ENCODE measurements at regions of chr1 and their contacts with region 1.

Region 1: DNA sequence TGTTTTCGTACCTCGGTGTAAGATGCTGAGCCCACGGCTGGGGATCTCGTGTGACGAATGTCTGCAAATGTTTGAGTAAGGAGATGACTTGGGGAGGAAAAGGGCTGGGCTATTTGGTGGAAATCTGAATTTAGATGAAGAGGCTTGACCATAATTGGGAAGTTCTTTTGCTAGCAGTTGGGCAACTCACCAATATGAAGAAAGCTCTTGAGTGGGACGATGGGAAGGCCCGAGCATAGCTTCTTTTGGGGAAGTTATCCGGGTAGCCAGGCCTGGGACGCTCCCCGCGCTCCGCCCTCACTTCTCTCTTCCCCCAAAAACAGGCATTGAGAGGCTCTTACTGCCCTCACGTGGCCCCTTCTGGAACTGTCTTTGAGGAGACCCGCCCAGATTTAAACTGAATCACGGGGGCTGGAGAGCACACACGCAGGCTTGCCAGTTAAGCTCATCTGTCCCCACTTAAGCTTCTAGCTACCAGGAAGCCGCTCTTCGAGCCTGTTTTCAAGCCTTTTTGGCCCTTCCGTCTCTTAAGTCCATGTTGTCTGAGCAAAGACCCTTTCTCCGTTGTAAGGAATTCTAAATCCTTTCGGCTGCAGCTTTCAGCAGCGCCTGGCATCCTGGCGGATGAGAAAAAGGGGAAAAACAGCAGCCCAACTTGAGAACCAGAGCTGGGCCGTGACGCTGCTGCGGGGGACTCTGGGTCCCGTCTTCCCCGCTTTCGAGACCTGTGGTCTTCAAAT is 93.1 kb downstream of the NID1 start:
- DNase-seq: peak; percentile 94
- ATAC-seq: peak; percentile 99
- H3K4me3 Mint-ChIP-seq: peak overlapping the region; percentile 75
- H3K27ac Mint-ChIP-seq: peak overlapping the region; percentile 91
- H3K4me1 Mint-ChIP-seq: peaks cover 22% of the 10 kb centered on the region
- H3K27me3 Mint-ChIP-seq: peaks cover 2% of the 10 kb centered on the region

Region 2: DNA sequence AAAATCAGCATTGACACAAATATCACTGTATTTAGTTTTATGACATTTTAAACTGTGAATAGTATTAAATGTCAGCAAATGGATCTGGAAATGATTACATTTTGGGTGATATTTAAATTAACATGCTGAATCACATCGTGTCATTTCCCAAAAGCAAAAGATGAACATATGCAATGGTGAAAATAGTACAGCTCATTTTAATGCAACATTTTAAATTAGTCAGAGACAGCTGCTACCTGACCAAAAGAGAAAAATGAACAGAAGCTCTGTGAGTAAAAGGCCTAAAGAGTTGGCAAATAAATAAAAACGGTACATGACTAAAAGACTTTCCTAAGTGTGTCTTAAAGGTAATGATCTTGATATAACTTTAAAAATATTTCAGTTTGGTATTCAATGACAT is 236.1 kb before region 1 on chr1:
- CTCF ChIA-PET with region 1: interaction called, 12 read pairs
- POLR2A ChIA-PET with region 1: interaction called, 3 read pairs
- DNase-seq: no peak
- ATAC-seq: no peak
- H3K4me3 Mint-ChIP-seq: no peak overlapping the region
- H3K27ac Mint-ChIP-seq: no peak overlapping the region
- H3K4me1 Mint-ChIP-seq: peaks cover 3% of the 10 kb centered on the region
- H3K27me3 Mint-ChIP-seq: no peaks in the 10 kb centered on the region

Region 3: GRCh38 chr1:235791532-235792060 is 180.1 kb before region 1 on chr1:
- CTCF ChIA-PET with region 1: interaction called, 18 read pairs
- POLR2A ChIA-PET with region 1: no interaction called
- DNase-seq: no peak
- ATAC-seq: no peak
- H3K4me3 Mint-ChIP-seq: no peak overlapping the region
- H3K27ac Mint-ChIP-seq: no peak overlapping the region
- H3K4me1 Mint-ChIP-seq: no peaks in the 10 kb centered on the region
- H3K27me3 Mint-ChIP-seq: no peaks in the 10 kb centered on the region

Region 4: DNA sequence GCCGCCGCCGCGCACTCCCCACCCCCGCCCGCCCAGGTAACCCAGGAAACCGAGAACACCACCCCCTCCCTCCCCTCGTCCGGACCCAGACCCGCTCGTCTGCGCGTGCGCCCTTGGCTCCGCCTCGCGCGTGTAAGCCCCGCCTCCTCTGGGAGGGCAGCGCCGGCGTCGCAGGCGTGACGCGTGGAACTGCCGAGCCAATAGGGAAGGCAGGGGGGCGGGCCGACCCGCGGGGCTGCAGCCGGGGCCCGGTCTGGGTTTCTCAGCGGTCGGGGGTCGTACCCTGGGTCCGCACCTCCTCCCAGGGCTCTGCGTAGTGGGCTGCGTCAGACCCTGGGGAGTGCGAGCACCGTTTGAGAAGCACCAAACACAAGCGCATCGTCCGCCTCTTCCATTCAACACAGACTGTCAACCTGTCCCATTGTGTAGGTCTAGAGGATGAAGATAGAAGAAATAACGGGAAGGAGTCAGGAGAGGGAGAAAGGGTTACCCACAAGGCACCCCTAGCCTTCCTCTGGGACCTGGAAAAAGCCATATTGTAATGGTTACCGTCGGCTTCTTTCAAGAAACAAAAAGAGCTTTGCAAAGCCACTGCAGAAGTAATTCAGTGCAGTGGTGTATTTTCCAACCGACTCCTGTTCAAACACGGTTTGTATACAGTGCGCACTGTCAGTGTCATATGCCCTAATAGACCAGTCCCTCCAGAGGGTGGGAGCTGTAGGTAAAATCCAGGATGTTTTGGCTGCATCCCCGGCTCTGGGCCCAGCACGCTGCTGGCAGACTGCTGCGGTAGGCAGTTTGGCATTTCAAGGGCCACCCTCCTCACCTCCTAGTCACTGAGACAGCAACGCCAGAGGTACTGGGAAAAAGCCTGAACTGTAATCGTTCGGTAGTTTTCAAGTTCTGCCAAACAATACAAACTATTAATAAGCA is 104.6 kb before region 1 on chr1:
- CTCF ChIA-PET with region 1: interaction called, 190 read pairs
- POLR2A ChIA-PET with region 1: interaction called, 65 read pairs
- DNase-seq: peak; percentile 97
- ATAC-seq: peak; percentile 70
- H3K4me3 Mint-ChIP-seq: peak overlapping the region; percentile 86
- H3K27ac Mint-ChIP-seq: peak overlapping the region; percentile 96
- H3K4me1 Mint-ChIP-seq: peaks cover 40% of the 10 kb centered on the region
- H3K27me3 Mint-ChIP-seq: no peaks in the 10 kb centered on the region

Region 5: DNA sequence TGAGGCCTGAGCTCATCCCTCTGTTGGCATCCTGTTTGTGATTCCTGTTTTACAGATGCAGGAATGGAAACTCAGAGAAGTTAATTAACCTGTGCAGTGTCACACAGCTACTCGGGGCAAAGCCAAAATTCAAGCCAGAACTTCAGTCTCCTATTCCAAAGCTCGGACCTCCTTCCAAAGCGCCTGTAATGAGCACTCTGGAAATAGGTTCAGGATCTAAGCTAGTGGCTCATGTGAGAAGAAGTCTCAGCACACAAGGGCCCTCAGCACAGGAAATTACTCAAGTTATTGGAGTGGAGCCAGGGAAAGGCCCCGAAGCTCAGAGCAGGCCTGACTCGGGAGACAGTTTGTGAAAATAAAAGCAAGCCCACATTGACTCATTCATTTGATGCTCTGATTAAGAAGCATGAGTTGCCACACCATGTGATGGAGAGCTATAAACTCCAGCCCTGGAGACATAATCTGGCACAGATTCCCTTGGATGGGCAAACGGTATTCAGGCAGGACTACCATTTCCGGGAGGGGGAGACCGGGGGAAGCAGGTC is 54.4 kb before region 1 on chr1:
- CTCF ChIA-PET with region 1: interaction called, 13 read pairs
- POLR2A ChIA-PET with region 1: interaction called, 5 read pairs
- DNase-seq: peak; percentile 37
- ATAC-seq: peak; percentile 57
- H3K4me3 Mint-ChIP-seq: no peak overlapping the region
- H3K27ac Mint-ChIP-seq: no peak overlapping the region
- H3K4me1 Mint-ChIP-seq: peaks cover 11% of the 10 kb centered on the region
- H3K27me3 Mint-ChIP-seq: no peaks in the 10 kb centered on the region

Region 6: GRCh38 chr1:235960809-235961208 is 10.9 kb before region 1 on chr1:
- CTCF ChIA-PET with region 1: interaction called, 127 read pairs
- POLR2A ChIA-PET with region 1: interaction called, 12 read pairs
- DNase-seq: no peak
- ATAC-seq: no peak
- H3K4me3 Mint-ChIP-seq: no peak overlapping the region
- H3K27ac Mint-ChIP-seq: no peak overlapping the region
- H3K4me1 Mint-ChIP-seq: peaks cover 15% of the 10 kb centered on the region
- H3K27me3 Mint-ChIP-seq: no peaks in the 10 kb centered on the region

Region 7: GRCh38 chr1:236009857-236010256 is 38.1 kb after region 1 on chr1:
- CTCF ChIA-PET with region 1: interaction called, 10 read pairs
- POLR2A ChIA-PET with region 1: no interaction called
- DNase-seq: no peak
- ATAC-seq: no peak
- H3K4me3 Mint-ChIP-seq: no peak overlapping the region
- H3K27ac Mint-ChIP-seq: no peak overlapping the region
- H3K4me1 Mint-ChIP-seq: no peaks in the 10 kb centered on the region
- H3K27me3 Mint-ChIP-seq: peaks cover 2% of the 10 kb centered on the region